ENCODE measurements at regions of chr5 and their contacts with region 1.

Region 1: DNA sequence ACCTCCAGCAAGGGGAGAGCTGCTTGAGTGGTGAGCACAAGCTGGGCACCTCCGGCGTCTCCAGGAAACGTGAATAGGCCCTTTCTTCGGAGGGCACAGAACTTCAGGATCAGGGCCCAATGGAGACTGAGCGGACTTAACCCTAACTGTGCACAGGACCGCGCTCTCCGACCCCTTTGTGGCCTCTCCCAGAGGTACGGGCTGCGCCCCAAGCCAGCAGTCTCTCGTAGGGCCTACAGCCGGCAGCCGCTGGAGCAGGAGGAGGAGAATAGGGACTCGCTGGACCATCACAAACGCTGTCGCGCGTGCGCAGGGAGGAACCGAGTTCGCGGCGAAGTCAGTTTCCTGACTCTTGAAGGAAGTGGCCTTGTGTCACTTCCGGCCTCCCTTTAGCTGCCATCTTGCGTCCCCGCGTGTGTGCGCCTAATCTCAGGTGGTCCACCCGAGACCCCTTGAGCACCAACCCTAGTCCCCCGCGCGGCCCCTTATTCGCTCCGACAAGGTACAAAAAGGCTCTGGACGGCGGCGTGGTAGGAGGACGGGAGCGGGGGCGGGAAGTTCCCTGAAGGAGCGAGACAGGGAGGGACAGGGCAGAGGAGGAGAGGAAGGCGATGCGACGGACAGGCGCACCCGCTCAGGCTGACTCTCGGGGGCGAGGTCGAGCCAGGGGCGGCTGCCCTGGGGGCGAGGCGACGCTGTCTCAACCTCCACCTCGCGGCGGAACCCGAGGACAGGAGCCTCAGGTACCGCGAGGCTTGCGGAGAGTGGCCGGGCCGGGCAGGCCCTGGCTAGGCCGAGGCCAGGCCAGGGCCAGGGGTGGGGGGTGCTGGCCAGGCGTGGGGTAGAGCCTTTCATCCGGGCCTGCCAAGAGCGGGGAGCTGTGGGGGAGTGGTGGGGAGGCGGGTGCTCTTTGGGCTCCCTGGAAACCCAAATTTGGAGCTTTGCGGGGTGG is at the start of gene BTF3:
- DNase-seq: peak; percentile 70 to 89
- H3K4me3 ChIP-seq: peak within 1 kb of the TSS; percentile 78 to 87 (median 82)
- H3K27ac ChIP-seq: peak within 1 kb of the TSS; percentile 97
- H3K4me1 ChIP-seq: peaks cover 1 to 12% (median 4%) of the 10 kb centered on the region in 4 experiments; a peak in 6 of 7 replicates
- H3K27me3 ChIP-seq: no peaks in the 10 kb centered on the region
- CTCF ChIP-seq: peak in 2 of 3 experiments; percentile 2 to 5; a peak in 1 of 4 replicates
- EP300 ChIP-seq: no peak
- POLR2A ChIP-seq: peak; percentile 42 to 91
- RAD21 ChIP-seq: peak in 1 of 2 experiments; percentile 13; a peak in 2 of 4 replicates
- total RNA-seq, gene BTF3: 754 and 760 TPM in 2 replicates

Region 2: DNA sequence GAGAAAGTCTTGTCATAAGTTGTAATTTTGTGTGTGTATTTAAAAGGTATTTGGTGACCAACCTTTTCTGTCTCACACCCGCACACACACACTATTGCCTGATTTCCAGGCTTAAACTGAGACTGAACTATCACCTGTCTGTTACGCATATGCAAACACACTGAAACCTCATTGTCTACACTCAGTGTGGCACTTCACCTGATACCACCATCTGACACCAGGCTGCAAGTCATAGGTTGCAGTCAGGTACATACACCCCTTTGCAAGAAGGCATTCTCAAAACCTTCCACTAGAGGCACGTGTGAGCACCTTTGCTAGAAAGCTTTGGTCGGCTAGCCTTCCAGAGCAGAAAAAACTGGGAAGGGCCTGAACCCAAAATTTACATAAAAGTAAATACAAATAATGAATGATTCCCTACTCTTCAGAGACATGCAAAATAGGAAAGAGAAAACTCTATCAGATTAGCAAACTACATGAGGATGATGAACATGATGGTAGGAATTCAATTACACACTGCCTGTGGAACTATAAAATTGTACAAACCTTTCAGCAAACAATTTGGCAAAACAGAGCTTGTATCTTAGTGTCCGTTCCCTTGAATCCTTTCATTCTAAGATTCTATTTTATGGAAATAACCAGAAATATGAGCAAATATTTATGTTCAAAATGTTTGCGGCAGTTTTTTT is 43.8 kb before region 1 on chr5:
- CTCF ChIA-PET with region 1: interaction called, 53 read pairs
- POLR2A ChIA-PET with region 1: interaction called, 25 read pairs
- DNase-seq: peak in 1 of 2 experiments; percentile 86
- H3K4me3 ChIP-seq: no peak overlapping the region
- H3K27ac ChIP-seq: no peak overlapping the region
- H3K4me1 ChIP-seq: peaks cover 0 to 11% (median 7%) of the 10 kb centered on the region in 4 experiments; a peak in 6 of 7 replicates
- H3K27me3 ChIP-seq: peaks cover 34 to 44% (median 41%) of the 10 kb centered on the region in 4 experiments
- CTCF ChIP-seq: peak; percentile 43 to 97 (median 82)
- EP300 ChIP-seq: no peak
- POLR2A ChIP-seq: no peak
- RAD21 ChIP-seq: peak; percentile 79 to 86

Region 3: DNA sequence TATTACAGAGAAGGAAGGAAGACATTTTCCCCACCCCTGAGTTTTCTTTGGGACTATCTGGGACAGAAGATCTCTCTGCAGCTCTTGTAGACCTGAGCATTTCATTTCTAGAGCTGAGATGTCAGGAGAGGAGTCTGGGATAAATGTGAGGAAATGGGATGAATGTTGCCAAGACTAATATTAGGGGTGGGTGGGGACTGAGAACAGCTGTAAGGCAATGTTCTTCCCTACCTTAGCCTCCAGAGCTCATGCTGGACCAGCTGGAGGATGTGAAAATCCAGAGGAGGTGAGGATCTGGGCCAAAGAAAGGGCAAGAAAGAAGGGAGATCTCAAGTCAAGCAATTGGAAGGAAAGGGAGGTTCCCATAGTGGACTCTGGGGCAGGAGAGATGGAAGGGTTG is 26.7 kb before region 1 on chr5:
- CTCF ChIA-PET with region 1: interaction called, 12 read pairs
- POLR2A ChIA-PET with region 1: interaction called, 4 read pairs
- DNase-seq: no peak
- H3K4me3 ChIP-seq: no peak overlapping the region
- H3K27ac ChIP-seq: no peak overlapping the region
- H3K4me1 ChIP-seq: no peaks in the 10 kb centered on the region
- H3K27me3 ChIP-seq: no peaks in the 10 kb centered on the region; a peak in 1 of 7 replicates
- CTCF ChIP-seq: no peak
- EP300 ChIP-seq: no peak
- POLR2A ChIP-seq: no peak
- RAD21 ChIP-seq: no peak

Region 4: DNA sequence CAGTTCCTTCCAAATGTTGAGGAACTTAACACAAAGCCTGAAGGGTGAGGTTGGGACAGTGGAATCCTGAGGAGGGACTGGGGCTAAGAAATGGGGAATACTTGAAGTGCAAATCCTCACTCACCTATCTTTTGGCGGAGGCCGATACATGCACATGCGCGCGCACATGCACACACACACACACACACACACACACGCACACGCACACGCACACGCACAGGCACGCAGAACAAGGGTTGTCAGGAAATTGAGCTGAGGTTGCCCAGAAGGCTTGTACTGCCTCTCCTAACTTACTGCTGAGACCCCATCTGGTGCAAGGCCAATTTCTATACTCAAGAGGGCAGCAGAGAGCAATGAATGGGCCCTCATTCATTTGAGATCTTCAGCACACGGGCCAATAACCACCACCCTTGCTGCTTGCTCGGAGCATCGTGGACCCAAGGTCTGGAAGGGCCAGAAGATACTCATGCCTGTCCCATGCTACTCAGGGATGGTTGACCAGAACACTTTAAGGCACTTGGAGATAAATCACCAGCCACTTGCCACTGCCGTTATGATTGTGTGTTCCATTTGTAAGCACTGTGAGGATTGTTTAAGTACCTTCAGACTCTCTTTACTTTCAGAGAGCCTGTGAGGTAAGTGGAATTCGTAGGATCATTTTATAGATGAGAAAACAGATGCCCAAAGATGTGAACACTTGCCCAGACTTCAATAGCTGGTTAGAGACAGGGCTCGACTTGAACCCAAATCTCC is 21.4 kb after region 1 on chr5:
- CTCF ChIA-PET with region 1: interaction called, 11 read pairs
- POLR2A ChIA-PET with region 1: interaction called, 42 read pairs
- DNase-seq: peak; percentile 63 to 79
- H3K4me3 ChIP-seq: 0 out of 8 replicates have a peak overlapping the region, but pooled peaks of 1 of the 4 experiments have one; percentile 3
- H3K27ac ChIP-seq: no peak overlapping the region
- H3K4me1 ChIP-seq: no peaks in the 10 kb centered on the region
- H3K27me3 ChIP-seq: no peaks in the 10 kb centered on the region
- CTCF ChIP-seq: peak; percentile 13 to 90 (median 83)
- EP300 ChIP-seq: no peak
- POLR2A ChIP-seq: no peak
- RAD21 ChIP-seq: peak; percentile 89 to 93

Measured in H1 (cell line).